ENCODE measurements at regions of chr18 and their contacts with region 1.

Region 1: GRCh38 chr18:812376-813171 is 532 bp upstream of the YES1 start:
- DNase-seq: peak; percentile 86
- H3K4me3 Mint-ChIP-seq: peak overlapping the region; percentile 87
- H3K27ac Mint-ChIP-seq: peak overlapping the region; percentile 99
- H3K4me1 Mint-ChIP-seq: peaks cover 57% of the 10 kb centered on the region
- H3K27me3 Mint-ChIP-seq: peaks cover 6% of the 10 kb centered on the region

Region 2: DNA sequence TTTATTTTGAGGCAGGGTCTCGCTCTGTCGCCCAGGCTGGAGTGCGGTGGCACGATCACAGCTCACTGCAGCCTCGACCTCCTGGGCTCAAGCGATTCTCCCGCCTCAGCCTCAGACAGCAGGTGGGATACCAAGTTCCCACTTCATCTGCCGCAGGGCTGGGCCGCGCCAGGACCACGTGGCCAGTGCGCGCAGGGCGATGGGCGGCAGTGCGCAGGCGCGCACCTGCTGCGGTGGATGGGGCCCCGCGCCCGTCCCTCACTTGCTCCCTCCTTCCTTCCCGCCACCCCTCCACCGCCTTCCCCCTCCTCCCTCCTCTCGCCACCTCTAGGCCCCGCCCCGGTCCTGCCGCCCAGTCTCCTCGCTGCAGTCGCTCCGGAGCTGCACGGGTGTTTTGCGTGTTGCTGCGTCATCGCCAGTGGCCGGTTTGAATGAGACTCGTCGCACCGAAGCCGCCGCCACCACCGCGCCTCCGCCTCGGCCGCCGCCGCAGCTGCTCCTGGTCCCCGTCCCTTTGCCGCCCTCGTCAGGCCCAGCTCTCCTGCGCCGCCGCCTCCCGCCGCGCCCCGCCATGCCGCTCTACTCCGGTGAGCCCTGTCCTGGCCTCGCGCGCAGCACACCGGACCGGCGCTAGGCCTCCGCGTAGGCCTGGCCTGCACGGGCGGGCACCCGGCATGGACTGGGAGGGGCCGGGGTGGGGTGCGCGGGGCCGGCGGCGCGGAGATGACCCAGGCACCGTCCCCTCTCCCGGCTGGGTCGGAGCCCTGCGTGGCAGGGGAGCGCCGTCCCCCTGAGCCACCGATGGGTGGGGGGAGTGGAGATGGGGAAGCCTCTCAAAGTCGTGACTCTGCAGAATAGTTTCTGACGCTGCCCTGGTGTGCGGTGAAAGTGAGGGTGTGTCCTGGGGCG is 654.2 kb before region 1 on chr18 and contains the start of gene USP14:
- CTCF ChIA-PET with region 1: no interaction called
- POLR2A ChIA-PET with region 1: no interaction called
- intact Hi-C with region 1: loop called (anchors 5 kb)
- DNase-seq: peak; percentile 99
- H3K4me3 Mint-ChIP-seq: peak within 1 kb of the TSS; percentile 86
- H3K27ac Mint-ChIP-seq: peak within 1 kb of the TSS; percentile 93
- H3K4me1 Mint-ChIP-seq: peaks cover 27% of the 10 kb centered on the region
- H3K27me3 Mint-ChIP-seq: no peaks in the 10 kb centered on the region
- total RNA-seq, gene USP14: 88.2 to 90.8 TPM

Region 3: DNA sequence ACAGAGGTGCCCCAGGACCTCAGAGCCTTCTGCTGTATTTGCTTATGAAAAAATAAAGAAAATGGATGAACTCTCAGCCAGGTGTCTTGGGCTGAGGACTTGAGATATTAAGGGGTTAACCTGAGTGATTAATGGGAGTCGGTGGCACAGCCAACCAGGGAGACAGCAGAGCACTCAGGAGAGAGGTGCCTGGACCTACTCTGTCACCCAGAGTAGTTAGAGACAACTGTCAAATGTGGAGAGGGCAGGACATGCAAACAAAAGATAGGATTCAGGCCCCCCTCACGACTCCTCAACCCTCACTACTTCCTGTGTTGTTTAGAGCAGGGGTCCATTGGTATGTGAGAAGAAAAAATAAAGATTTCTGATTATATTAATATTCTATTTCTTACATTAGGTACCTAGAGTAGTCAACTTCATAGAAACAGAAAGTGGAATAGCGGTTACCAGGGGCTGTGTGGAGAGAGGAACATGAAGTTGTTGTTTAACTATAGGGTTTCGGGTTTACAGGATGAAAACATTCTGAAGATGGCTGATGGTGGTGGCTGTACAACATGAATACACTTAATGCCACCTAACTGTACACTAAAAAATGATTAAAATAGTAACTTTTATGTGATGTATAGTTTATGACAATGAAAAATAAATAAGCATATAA is 261.0 kb before region 1 on chr18:
- CTCF ChIA-PET with region 1: no interaction called
- POLR2A ChIA-PET with region 1: no interaction called
- intact Hi-C with region 1: no loop called
- DNase-seq: no peak
- H3K4me3 Mint-ChIP-seq: no peak overlapping the region
- H3K27ac Mint-ChIP-seq: no peak overlapping the region
- H3K4me1 Mint-ChIP-seq: no peaks in the 10 kb centered on the region
- H3K27me3 Mint-ChIP-seq: peaks cover 12% of the 10 kb centered on the region

Region 4: GRCh38 chr18:681985-682384 is 130.6 kb before region 1 on chr18:
- CTCF ChIA-PET with region 1: no interaction called
- POLR2A ChIA-PET with region 1: no interaction called
- intact Hi-C with region 1: loop called (anchors 1 kb)
- DNase-seq: peak; percentile 77
- H3K4me3 Mint-ChIP-seq: no peak overlapping the region
- H3K27ac Mint-ChIP-seq: peak overlapping the region; percentile 72
- H3K4me1 Mint-ChIP-seq: peaks cover 15% of the 10 kb centered on the region
- H3K27me3 Mint-ChIP-seq: no peaks in the 10 kb centered on the region

Region 5: DNA sequence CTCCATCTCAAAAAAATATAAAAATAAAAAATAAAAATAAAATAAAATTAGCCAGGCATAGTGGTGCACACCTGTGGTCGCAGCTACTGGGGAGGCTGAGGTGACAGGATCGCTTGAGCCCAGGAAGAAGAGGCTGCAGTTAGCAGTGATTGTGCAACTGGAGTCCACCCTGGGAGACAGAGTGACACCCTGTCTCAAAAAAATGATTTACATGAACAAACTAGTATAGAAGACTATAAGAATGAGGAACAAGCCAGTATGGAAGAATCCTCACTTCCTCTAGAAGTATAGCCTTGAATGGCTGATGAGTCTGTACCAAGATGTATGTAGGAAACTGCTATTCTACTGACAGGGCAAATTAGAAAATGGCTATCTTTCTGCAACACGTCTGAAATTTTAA is 11.4 kb before region 1 on chr18:
- CTCF ChIA-PET with region 1: interaction called, 3 read pairs
- POLR2A ChIA-PET with region 1: interaction called, 4 read pairs
- intact Hi-C with region 1: loop called (anchors 2 kb)
- DNase-seq: no peak
- H3K4me3 Mint-ChIP-seq: no peak overlapping the region
- H3K27ac Mint-ChIP-seq: no peak overlapping the region
- H3K4me1 Mint-ChIP-seq: peaks cover 33% of the 10 kb centered on the region
- H3K27me3 Mint-ChIP-seq: no peaks in the 10 kb centered on the region

Region 6: DNA sequence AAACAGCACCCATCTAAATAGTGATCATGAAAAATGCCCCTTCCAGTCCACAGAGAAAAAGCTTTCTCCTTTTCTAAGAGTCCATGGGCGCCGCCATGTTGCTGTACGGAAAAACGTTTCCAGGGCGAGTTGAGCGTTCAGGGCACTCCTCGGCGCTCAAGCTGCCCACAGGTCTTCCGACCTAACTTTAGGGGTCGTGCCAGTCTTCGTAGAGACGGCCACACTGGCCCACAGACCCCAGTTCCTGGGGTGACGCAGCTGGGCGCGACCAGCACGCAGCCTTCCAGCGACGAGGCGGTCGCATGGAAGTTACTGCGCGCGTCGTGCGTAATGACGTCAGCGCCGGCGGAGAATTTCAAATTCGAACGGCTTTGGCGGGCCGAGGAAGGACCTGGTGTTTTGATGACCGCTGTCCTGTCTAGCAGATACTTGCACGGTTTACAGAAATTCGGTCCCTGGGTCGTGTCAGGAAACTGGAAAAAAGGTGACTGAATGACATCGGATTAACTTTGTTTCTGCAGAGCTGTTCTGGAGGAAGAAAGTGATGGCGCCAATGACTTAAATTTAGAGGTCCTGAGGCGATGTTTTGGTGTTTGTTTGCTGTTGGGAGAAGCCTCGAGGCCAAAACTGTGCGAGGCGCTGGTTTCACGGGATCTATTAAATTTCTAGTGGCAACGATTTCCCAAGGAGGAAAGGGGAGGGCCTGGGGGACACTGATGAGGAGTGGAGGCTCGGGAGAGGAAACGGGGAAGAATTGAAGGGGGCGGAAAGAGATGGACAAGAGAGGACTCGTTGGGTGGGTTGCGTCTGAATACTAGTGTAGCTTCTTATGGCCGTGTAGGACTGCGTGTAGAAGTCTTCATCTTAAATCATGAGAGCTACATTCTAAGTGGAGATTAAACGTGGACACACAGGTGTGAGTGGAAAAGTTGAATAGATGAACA is 1758.9 kb after region 1 on chr18 and contains the starts of genes METTL4 and NDC80:
- CTCF ChIA-PET with region 1: no interaction called
- POLR2A ChIA-PET with region 1: no interaction called
- intact Hi-C with region 1: loop called (anchors 5 kb)
- DNase-seq: peak; percentile 90
- H3K4me3 Mint-ChIP-seq: peak within 1 kb of the TSS; percentile 96
- H3K27ac Mint-ChIP-seq: peak within 1 kb of the TSS; percentile 95
- H3K4me1 Mint-ChIP-seq: peaks cover 51% of the 10 kb centered on the region
- H3K27me3 Mint-ChIP-seq: no peaks in the 10 kb centered on the region
- total RNA-seq, gene METTL4: 19.6 to 23.0 TPM
- total RNA-seq, gene NDC80: 79.3 to 83.1 TPM